Activated naive CD4-positive, alpha-beta T cell treated with anti-CD3 and anti-CD28 coated beads for 36 hours (primary cell): ENCODE measurements at regions of chr21 and their contacts with region 1.

Region 1: DNA sequence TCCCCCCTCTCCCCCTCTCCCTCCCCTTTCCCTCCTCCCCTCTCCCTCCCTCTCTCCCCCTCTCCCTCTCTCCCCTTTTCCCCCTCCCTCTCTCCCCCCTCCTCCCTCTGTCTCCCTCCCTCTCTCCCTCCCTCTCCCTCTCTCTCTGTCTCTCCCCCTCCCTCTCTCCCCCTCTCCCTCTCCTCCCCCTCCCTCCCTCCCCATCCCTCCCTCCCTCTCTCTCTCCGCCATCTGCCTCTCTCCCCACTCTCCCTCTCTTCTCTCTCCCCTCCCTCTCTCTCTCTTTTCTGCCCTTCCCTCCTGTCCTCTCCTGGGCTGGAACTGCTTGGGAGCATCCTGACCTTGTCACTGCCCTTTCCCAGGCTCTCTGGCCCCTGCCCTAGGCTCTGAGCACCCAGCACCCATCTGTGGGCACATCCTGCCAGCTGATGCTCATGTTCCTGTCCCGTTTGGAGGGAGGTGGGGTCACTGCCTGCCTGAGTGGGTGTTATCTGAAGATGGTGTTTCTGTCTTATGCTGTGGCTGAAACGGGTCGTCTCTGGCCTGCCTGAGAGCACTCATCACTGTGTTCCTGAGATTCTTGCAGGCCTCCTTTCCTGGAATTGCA is 10.8 kb downstream of the FTCD start:
- DNase-seq: no peak
- H3K4me3 Mint-ChIP-seq: no peak overlapping the region
- H3K27ac Mint-ChIP-seq: peak overlapping the region; percentile 76
- H3K4me1 Mint-ChIP-seq: peaks cover 13% of the 10 kb centered on the region
- H3K27me3 Mint-ChIP-seq: no peaks in the 10 kb centered on the region

Region 2: GRCh38 chr21:45680215-45680614 is 464.4 kb before region 1 on chr21:
- CTCF ChIA-PET with region 1: no interaction called
- intact Hi-C with region 1: no loop called
- DNase-seq: no peak
- H3K4me3 Mint-ChIP-seq: no peak overlapping the region
- H3K27ac Mint-ChIP-seq: no peak overlapping the region
- H3K4me1 Mint-ChIP-seq: no peaks in the 10 kb centered on the region
- H3K27me3 Mint-ChIP-seq: no peaks in the 10 kb centered on the region

Region 3: DNA sequence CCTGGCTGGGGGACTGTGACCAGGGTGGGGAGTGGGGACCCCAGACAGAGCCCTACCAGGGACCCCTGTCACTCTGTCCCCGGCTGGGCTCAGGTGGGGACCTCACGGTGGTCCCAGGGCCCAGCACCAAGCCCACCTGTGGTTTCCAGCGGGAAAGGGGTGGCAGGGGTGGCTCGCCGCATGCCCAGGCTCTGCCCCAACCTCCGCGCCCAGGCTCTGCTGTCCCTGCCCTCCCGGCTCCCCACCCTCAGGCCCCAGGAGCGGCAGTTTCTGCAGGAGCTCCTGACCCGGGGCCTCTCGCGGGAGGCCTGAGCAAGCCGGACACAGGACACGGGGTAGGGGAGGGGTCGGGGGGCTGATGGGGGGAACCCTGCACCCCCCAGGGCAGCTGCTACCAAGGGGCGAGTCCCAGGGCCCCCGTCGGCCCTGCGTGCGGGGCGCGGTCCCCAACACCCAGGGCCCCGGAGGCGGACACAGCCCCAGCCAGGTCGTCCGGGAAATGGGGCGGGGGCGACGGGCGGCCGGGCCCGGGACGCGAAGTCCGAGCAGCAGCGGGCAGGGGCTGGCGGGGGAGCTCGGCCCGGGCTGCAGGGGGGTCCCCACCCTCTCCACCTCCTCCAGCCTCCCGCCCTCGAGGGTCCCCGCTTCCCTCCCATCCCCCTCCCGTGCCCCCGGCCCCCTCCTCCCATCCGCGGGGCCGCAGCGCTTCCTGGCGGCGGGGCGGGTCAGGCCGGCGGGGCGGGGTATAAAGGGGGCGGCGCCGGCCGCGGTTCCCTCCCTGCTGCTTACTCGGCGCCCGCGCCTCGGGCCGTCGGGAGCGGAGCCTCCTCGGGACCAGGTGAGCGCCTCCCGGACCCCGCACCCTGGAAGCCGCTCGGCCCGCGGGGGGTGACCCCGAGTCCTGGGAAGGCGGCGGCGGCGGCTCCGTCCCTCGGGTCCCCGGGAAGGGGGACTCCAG is 47.0 kb before region 1 on chr21 and contains the start of gene COL6A2:
- CTCF ChIA-PET with region 1: interaction called, 5 read pairs
- intact Hi-C with region 1: loop called (anchors 1 kb)
- DNase-seq: peak; percentile 63
- H3K4me3 Mint-ChIP-seq: peak within 1 kb of the TSS; percentile 58
- H3K27ac Mint-ChIP-seq: no peak within 1 kb of the TSS
- H3K4me1 Mint-ChIP-seq: no peaks in the 10 kb centered on the region
- H3K27me3 Mint-ChIP-seq: peaks cover 19% of the 10 kb centered on the region
- total RNA-seq, gene COL6A2: 6.7 to 8.4 TPM

Region 4: GRCh38 chr21:46210378-46211136 is 66.0 kb after region 1 on chr21:
- CTCF ChIA-PET with region 1: no interaction called
- intact Hi-C with region 1: no loop called
- DNase-seq: no peak
- H3K4me3 Mint-ChIP-seq: no peak overlapping the region
- H3K27ac Mint-ChIP-seq: no peak overlapping the region
- H3K4me1 Mint-ChIP-seq: no peaks in the 10 kb centered on the region
- H3K27me3 Mint-ChIP-seq: no peaks in the 10 kb centered on the region

Region 5: GRCh38 chr21:46228345-46229051 is 83.9 kb after region 1 on chr21 and contains the start of gene LSS:
- CTCF ChIA-PET with region 1: interaction called, 11 read pairs
- intact Hi-C with region 1: loop called (anchors 1 kb)
- DNase-seq: peak; percentile 95
- H3K4me3 Mint-ChIP-seq: peak within 1 kb of the TSS; percentile 97
- H3K27ac Mint-ChIP-seq: peak within 1 kb of the TSS; percentile 81
- H3K4me1 Mint-ChIP-seq: peaks cover 34% of the 10 kb centered on the region
- H3K27me3 Mint-ChIP-seq: no peaks in the 10 kb centered on the region
- total RNA-seq, gene LSS: 9.6 to 12.6 TPM

Region 6: DNA sequence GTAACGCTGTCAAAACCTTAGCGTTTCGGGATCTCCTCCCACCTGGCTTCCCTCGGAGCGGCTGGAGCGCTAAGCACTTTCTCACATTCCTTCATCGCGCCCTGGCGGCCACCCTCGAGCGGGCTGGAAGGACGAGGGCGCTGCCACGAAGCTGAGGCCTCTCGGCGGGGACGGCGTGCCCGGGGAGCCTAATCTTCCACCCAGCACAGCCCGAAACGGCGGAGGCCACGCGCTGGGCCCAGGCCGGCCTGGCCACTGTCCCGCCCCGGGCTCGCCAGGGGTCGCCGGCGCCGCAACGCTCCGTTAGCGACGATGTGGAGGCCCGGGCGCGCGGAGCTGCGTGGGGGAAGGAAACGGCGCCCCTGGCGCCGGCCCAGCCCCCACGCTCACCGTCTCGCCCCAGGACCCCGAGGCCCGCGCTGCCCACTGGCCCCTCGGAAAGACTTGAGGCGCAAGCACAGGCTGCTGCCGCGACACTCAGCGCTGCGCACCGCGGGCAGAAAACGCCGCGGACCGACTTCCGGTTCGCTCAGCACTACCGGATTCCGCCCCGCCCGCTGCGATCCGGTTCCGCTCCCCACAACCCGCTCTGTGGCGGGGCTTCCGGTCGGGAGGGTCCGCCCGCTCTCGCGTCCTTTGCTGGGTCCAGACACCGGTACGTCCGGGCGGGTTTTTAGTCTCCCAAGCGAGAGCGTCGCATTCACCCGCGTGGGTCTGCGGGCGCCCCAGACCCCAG is 141.4 kb after region 1 on chr21 and contains the start of gene YBEY:
- CTCF ChIA-PET with region 1: interaction called, 3 read pairs
- intact Hi-C with region 1: loop called (anchors 1 kb)
- DNase-seq: peak; percentile 89
- H3K4me3 Mint-ChIP-seq: peak within 1 kb of the TSS; percentile 98
- H3K27ac Mint-ChIP-seq: peak within 1 kb of the TSS; percentile 96
- H3K4me1 Mint-ChIP-seq: peaks cover 59% of the 10 kb centered on the region
- H3K27me3 Mint-ChIP-seq: no peaks in the 10 kb centered on the region
- total RNA-seq, gene YBEY: 9.9 to 11.0 TPM